ENCODE measurements at regions of chr3 and their contacts with region 1.

Region 1: DNA sequence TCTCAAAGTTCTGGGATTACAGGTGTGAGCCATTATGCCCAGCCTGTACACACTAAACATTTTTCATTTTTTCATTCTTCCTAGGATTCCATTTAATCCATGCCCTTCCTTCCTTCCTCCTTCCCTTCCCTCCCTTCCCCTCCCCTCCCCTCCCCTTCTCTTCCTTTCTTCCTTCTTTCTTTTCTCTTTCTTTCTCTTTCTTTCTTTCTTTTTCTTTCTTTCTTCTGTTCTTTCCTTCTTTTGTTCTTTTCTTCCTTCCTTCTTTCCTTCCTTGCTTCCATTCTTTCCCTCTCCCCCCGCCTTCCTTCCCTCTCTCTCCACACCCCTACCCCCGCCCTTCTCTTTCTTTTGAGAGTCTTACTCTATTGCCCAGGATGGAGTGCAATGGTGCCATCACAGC is 40.9 kb upstream of the ATP13A3 start:
- DNase-seq: no peak
- H3K4me3 ChIP-seq: no peak overlapping the region
- H3K27ac ChIP-seq: peak overlapping the region; percentile 95
- H3K4me1 ChIP-seq: peaks cover 27% of the 10 kb centered on the region
- H3K27me3 ChIP-seq: no peaks in the 10 kb centered on the region
- CTCF ChIP-seq: no peak

Region 2: GRCh38 chr3:194647747-194648146 is 120.0 kb after region 1 on chr3:
- CTCF ChIA-PET with region 1: no interaction called
- POLR2A ChIA-PET with region 1: no interaction called
- intact Hi-C with region 1: no loop called
- DNase-seq: no peak
- H3K4me3 ChIP-seq: no peak overlapping the region
- H3K27ac ChIP-seq: no peak overlapping the region
- H3K4me1 ChIP-seq: no peaks in the 10 kb centered on the region
- H3K27me3 ChIP-seq: no peaks in the 10 kb centered on the region
- CTCF ChIP-seq: no peak

Region 3: GRCh38 chr3:194720048-194720447 is 192.3 kb after region 1 on chr3:
- CTCF ChIA-PET with region 1: no interaction called
- POLR2A ChIA-PET with region 1: no interaction called
- intact Hi-C with region 1: no loop called
- DNase-seq: no peak
- H3K4me3 ChIP-seq: no peak overlapping the region
- H3K27ac ChIP-seq: no peak overlapping the region
- H3K4me1 ChIP-seq: peaks cover 35% of the 10 kb centered on the region
- H3K27me3 ChIP-seq: no peaks in the 10 kb centered on the region
- CTCF ChIP-seq: no peak

Region 4: GRCh38 chr3:194782698-194783404 is 255.1 kb after region 1 on chr3:
- CTCF ChIA-PET with region 1: no interaction called
- POLR2A ChIA-PET with region 1: no interaction called
- intact Hi-C with region 1: no loop called
- DNase-seq: no peak
- H3K4me3 ChIP-seq: no peak overlapping the region
- H3K27ac ChIP-seq: no peak overlapping the region
- H3K4me1 ChIP-seq: 0 out of 2 replicates have a peak, but pooled peaks cover 4% of the 10 kb centered on the region
- H3K27me3 ChIP-seq: no peaks in the 10 kb centered on the region
- CTCF ChIP-seq: no peak

Region 5: DNA sequence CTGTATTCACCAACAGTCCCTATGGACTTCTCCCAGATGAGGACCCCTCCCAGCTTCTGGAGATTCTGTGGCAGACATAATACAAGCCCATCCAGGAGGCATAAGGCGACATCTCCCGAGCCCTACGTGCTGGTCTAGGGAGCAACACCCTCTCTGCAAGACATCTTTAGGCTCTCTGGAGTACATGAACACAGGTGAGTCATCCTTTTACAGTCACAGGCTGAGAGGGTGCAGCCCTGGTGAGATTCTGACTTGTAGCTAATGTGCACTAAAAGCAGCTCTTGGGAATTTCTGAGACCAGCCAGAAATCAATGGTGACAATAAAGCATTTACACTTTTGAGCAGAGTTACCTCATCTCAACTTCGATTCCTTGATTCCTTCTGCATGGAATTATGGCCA is 612.1 kb after region 1 on chr3:
- CTCF ChIA-PET with region 1: no interaction called
- POLR2A ChIA-PET with region 1: interaction called, 17 read pairs
- intact Hi-C with region 1: no loop called
- DNase-seq: peak in 1 of 2 experiments; percentile 47
- H3K4me3 ChIP-seq: no peak overlapping the region
- H3K27ac ChIP-seq: no peak overlapping the region
- H3K4me1 ChIP-seq: 0 out of 2 replicates have a peak, but pooled peaks cover 4% of the 10 kb centered on the region
- H3K27me3 ChIP-seq: no peaks in the 10 kb centered on the region
- CTCF ChIP-seq: no peak

Measured in PC-9 (cell line).